ENCODE measurements at regions of chr6 and their contacts with region 1.

Region 1: DNA sequence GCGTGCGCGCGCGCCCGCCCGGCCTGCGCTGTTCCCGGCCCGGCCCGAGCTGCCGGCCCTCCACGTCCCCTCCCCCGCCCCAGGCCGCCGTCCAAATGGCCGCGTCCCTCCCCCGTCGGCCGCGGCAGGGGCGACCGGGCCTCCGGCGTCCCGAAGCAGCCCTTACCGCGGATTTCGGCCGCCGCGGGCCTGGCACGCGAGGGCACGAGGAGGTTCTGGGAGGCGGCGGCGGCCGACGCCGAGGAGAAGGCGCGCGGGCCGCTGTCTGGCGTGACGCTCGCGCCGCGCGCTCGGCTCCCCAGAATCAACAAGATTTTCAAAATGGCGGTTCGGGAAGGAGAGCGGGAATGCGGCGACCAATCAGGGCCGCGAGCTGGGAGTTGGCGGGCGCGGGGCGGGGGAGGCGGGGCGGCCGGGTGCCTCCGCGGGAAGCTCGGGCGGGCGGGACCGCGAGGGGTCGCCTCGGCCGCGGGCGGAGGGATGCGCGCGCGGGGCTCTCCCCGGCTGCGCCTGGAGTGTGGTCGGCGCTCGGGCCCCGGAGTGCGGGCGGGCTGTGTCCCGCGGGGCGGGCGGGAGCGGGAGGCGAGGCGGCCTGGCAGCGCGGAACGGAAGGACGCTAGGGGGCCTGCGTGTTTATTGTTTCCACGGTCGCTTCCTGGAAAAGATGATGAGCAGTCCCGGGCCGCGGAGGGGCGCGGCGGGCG is at the start of gene DEK:
- DNase-seq: peak; percentile 81
- ATAC-seq: peak; percentile 62
- H3K4me3 Mint-ChIP-seq: peak within 1 kb of the TSS; percentile 89
- H3K27ac Mint-ChIP-seq: peak within 1 kb of the TSS; percentile 94
- H3K4me1 Mint-ChIP-seq: peaks cover 48% of the 10 kb centered on the region
- H3K27me3 Mint-ChIP-seq: no peaks in the 10 kb centered on the region
- CTCF ChIP-seq: no peak
- total RNA-seq, gene DEK: 80.8 and 81.9 TPM in 2 replicates

Region 2: GRCh38 chr6:17706580-17707370 is 557.6 kb before region 1 on chr6 and contains the start of gene NUP153:
- CTCF ChIA-PET with region 1: no interaction called
- POLR2A ChIA-PET with region 1: no interaction called
- intact Hi-C with region 1: loop called (anchors 1 kb)
- DNase-seq: peak; percentile 100
- ATAC-seq: peak; percentile 67
- H3K4me3 Mint-ChIP-seq: peak within 1 kb of the TSS; percentile 89
- H3K27ac Mint-ChIP-seq: peak within 1 kb of the TSS; percentile 95
- H3K4me1 Mint-ChIP-seq: peaks cover 44% of the 10 kb centered on the region
- H3K27me3 Mint-ChIP-seq: no peaks in the 10 kb centered on the region
- CTCF ChIP-seq: no peak
- total RNA-seq, gene NUP153: 59.2 and 63.8 TPM in 2 replicates

Region 3: GRCh38 chr6:18155150-18155863 is 109.1 kb before region 1 on chr6 and contains the start of gene KDM1B:
- CTCF ChIA-PET with region 1: no interaction called
- POLR2A ChIA-PET with region 1: interaction called, 4 read pairs
- intact Hi-C with region 1: loop called (anchors 1 kb)
- DNase-seq: peak; percentile 96
- ATAC-seq: peak; percentile 91
- H3K4me3 Mint-ChIP-seq: peak within 1 kb of the TSS; percentile 97
- H3K27ac Mint-ChIP-seq: peak within 1 kb of the TSS; percentile 93
- H3K4me1 Mint-ChIP-seq: peaks cover 28% of the 10 kb centered on the region
- H3K27me3 Mint-ChIP-seq: no peaks in the 10 kb centered on the region
- CTCF ChIP-seq: no peak
- total RNA-seq, gene KDM1B: 19.6 and 21.0 TPM in 2 replicates

Region 4: GRCh38 chr6:18249271-18249670 is 15.1 kb before region 1 on chr6:
- CTCF ChIA-PET with region 1: no interaction called
- POLR2A ChIA-PET with region 1: interaction called, 5 read pairs
- intact Hi-C with region 1: loop called (anchors 2 kb)
- DNase-seq: no peak
- ATAC-seq: no peak
- H3K4me3 Mint-ChIP-seq: no peak overlapping the region
- H3K27ac Mint-ChIP-seq: no peak overlapping the region
- H3K4me1 Mint-ChIP-seq: peaks cover 5% of the 10 kb centered on the region
- H3K27me3 Mint-ChIP-seq: no peaks in the 10 kb centered on the region
- CTCF ChIP-seq: no peak

Region 5: GRCh38 chr6:18400831-18401446 is 136.6 kb after region 1 on chr6:
- CTCF ChIA-PET with region 1: no interaction called
- POLR2A ChIA-PET with region 1: interaction called, 4 read pairs
- intact Hi-C with region 1: loop called (anchors 2 kb)
- DNase-seq: no peak
- ATAC-seq: peak; percentile 90
- H3K4me3 Mint-ChIP-seq: peak overlapping the region; percentile 59
- H3K27ac Mint-ChIP-seq: peak overlapping the region; percentile 93
- H3K4me1 Mint-ChIP-seq: peaks cover 40% of the 10 kb centered on the region
- H3K27me3 Mint-ChIP-seq: no peaks in the 10 kb centered on the region
- CTCF ChIP-seq: no peak

Region 6: GRCh38 chr6:20212392-20213217 is 1948.2 kb after region 1 on chr6 and contains the start of gene MBOAT1:
- CTCF ChIA-PET with region 1: no interaction called
- POLR2A ChIA-PET with region 1: no interaction called
- intact Hi-C with region 1: loop called (anchors 5 kb)
- DNase-seq: peak; percentile 43
- ATAC-seq: peak; percentile 73
- H3K4me3 Mint-ChIP-seq: peak within 1 kb of the TSS; percentile 90
- H3K27ac Mint-ChIP-seq: peak within 1 kb of the TSS; percentile 85
- H3K4me1 Mint-ChIP-seq: peaks cover 22% of the 10 kb centered on the region
- H3K27me3 Mint-ChIP-seq: peaks cover 3% of the 10 kb centered on the region
- CTCF ChIP-seq: no peak
- total RNA-seq, gene MBOAT1: 3.5 and 3.7 TPM in 2 replicates

Measured in activated B cell treated with CpG ODN at 0.5 μM for 24 hours (primary cell).